ENCODE measurements at regions of chr6 and their contacts with region 1.

Region 1: DNA sequence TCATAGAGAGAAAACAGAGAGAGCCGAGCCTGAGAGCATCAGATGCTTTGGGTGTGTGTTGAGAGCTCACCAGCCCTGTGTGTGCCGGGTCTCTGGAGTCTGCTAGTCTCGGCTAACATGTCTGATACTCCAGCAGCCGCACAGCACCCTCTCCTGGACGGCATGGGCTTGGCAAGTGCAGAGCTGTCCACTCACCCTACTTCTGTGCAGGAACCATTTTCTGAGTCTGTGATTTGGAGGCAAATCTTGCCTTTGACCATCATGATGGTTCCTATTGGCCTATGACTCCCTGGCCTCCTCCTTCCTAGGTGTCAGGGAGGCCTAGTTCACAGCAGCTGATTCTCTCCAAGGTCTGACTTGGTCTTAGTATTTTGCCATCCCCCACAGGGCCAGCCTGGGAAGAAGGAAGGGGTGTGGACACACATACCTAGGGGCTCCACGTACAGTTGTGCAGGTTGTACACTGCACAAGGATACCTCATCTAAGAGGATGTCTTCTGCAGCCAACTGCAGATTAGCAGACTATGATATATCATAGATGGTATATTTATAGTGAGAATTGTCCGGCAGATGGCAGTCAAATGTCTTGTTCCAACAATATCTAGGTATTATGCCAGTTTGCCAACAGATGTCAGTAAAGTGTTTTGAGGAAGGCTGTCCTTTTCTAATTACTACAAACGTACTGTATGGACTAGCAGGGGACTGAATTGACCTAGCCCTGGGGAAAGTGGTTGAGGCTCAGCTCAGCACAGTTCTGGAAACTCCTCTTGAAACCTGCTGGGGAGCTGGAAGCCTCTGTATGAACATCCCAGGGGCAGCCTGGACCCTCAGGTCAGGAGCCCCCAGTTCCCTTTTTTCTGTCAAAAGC is 13.0 kb downstream of the FGD2 start:
- DNase-seq: peak; percentile 41
- H3K4me3 ChIP-seq: no peak overlapping the region
- H3K27me3 ChIP-seq: no peaks in the 10 kb centered on the region
- CTCF ChIP-seq: peak; percentile 97

Region 2: DNA sequence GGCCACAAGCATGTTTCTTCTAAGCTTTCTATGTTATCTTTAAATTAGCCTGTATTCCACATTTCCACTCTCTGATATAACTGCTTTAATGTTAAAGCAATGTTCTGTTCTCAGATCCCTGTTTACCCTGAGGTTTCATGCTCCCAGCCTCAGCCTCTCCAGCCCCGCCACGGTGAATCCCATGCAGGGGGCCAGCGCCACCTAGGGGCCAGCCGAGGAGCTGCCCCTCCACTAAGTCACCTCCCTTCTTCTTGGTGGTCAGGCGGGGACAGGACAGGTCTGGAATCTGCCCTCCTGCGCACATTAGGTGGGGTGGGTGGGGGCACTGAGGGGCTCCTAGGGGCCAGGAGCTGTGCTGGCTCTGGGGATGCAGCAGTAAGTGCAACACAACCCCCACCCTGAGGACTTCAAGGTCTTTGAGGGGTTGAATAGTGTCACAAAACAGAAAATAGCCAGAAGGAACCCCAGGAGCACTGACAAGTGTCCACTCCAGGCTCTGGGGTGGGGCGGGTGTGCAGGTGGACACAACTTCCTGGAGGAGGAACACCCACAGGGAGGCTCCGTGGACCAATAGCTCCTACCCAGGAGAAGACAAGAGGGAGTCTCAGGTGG is 259.2 kb before region 1 on chr6:
- CTCF ChIA-PET with region 1: interaction called, 298 read pairs
- POLR2A ChIA-PET with region 1: interaction called, 3 read pairs
- DNase-seq: no peak
- H3K4me3 ChIP-seq: no peak overlapping the region
- H3K27me3 ChIP-seq: peaks cover 2% of the 10 kb centered on the region
- CTCF ChIP-seq: peak; percentile 100

Region 3: GRCh38 chr6:36862164-36862847 is 156.1 kb before region 1 on chr6:
- CTCF ChIA-PET with region 1: interaction called, 11 read pairs
- POLR2A ChIA-PET with region 1: no interaction called
- DNase-seq: no peak
- H3K4me3 ChIP-seq: no peak overlapping the region
- H3K27me3 ChIP-seq: no peaks in the 10 kb centered on the region
- CTCF ChIP-seq: no peak

Region 4: GRCh38 chr6:36897609-36898008 is 120.8 kb before region 1 on chr6:
- CTCF ChIA-PET with region 1: interaction called, 13 read pairs
- POLR2A ChIA-PET with region 1: no interaction called
- DNase-seq: no peak
- H3K4me3 ChIP-seq: no peak overlapping the region
- H3K27me3 ChIP-seq: no peaks in the 10 kb centered on the region
- CTCF ChIP-seq: no peak

Region 5: DNA sequence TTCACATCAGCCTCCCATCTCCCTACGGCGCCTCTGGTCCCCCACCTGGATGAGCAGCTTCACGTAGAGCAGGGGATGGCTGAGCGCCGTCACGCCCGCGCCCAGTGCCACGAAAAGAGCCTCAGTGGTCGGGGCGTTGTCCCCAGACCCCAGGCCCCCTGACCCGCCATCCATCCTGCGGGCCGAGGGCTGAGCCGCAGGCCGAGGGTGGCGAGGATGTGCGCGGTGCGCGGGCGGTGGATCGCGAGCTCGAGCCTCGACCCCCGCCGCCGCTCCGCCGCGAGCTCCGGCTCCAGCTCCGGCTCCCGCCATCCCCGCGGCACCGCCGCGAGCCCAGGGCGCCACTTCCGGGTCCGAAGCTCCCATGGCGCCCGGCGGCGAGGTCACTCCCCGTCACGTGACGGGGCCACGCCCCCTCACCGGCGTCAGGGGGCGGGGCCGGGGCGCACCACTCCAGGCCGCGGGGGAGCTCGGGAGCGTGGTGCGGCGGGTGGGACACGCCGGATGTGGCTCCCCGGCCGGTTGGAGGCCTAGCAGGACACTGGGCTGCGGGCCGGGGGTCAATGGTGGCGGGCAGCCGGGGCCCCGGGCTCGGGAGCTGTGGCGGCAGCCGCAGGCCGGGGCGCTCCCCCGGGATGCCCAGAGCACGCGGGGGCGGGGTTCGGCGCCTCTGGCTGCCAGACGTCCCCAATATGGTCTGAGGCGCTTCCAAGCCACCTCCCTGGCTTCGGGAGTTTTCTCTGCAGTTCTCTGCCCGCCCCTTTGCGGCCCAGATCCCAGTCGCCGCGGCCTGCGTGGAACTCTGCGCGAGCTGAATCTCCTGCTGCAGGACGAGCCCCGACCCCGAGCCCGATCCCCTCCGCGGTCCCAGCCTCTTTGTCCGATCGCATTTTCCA is 32.4 kb before region 1 on chr6 and contains the start of gene MTCH1:
- CTCF ChIA-PET with region 1: interaction called, 26 read pairs
- POLR2A ChIA-PET with region 1: no interaction called
- DNase-seq: peak; percentile 10
- H3K4me3 ChIP-seq: peak within 1 kb of the TSS; percentile 100
- H3K27me3 ChIP-seq: peaks cover 2% of the 10 kb centered on the region; the same call in 1 of the 2 replicates
- CTCF ChIP-seq: no peak
- polyA plus RNA-seq, gene MTCH1: 123 and 207 TPM in 2 replicates

Region 6: GRCh38 chr6:37051138-37052026 is 33.0 kb after region 1 on chr6:
- CTCF ChIA-PET with region 1: interaction called, 28 read pairs
- POLR2A ChIA-PET with region 1: no interaction called
- DNase-seq: no peak
- H3K4me3 ChIP-seq: no peak overlapping the region
- H3K27me3 ChIP-seq: peaks cover 2% of the 10 kb centered on the region
- CTCF ChIP-seq: peak; percentile 89

Region 7: DNA sequence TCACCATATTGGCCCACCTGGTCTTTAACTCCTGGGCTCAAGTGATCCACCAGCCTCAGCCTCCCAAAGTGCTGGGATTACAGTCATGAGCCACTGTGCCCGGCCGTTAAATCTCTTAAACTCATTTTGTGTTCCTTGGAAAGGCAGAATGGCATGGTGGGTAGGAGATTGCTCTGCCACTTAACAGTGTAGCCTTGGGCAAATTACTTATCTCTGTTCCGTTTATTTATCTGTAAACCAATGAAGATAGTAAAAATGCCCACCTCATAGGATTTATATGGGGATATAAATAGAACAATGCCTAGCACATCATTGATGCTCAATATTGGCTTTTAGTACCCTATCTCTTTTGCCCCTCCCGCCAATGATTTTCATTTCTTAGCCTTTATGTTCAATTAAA is 144.3 kb after region 1 on chr6:
- CTCF ChIA-PET with region 1: no interaction called
- POLR2A ChIA-PET with region 1: no interaction called
- DNase-seq: no peak
- H3K4me3 ChIP-seq: no peak overlapping the region
- H3K27me3 ChIP-seq: no peaks in the 10 kb centered on the region
- CTCF ChIP-seq: no peak

Region 8: GRCh38 chr6:37207903-37208456 is 189.5 kb after region 1 on chr6:
- CTCF ChIA-PET with region 1: interaction called, 588 read pairs
- POLR2A ChIA-PET with region 1: interaction called, 3 read pairs
- DNase-seq: no peak
- H3K4me3 ChIP-seq: no peak overlapping the region
- H3K27me3 ChIP-seq: no peaks in the 10 kb centered on the region; the same call in 1 of the 2 replicates
- CTCF ChIP-seq: peak; percentile 89

Measured in BJ (cell line).